Naive thymus-derived CD4-positive, alpha-beta T cell (primary cell): ENCODE measurements at regions of chr1 and their contacts with region 1.

Region 1: GRCh38 chr1:52365746-52366516 is at the start of gene CC2D1B:
- DNase-seq: peak; percentile 97 to 100 (median 99)
- ATAC-seq: peak; percentile 90
- H3K4me3 ChIP-seq: peak within 1 kb of the TSS; percentile 67
- H3K4me3 Mint-ChIP-seq: peak within 1 kb of the TSS; percentile 85 to 98 (median 94)
- H3K27ac ChIP-seq: peak within 1 kb of the TSS; percentile 95
- H3K27ac Mint-ChIP-seq: peak within 1 kb of the TSS; percentile 89 to 97 (median 94)
- H3K4me1 ChIP-seq: peaks cover 15 to 20% of the 10 kb centered on the region in 2 donors
- H3K4me1 Mint-ChIP-seq: peaks cover 26 to 65% (median 51%) of the 10 kb centered on the region in 7 donors
- H3K27me3 ChIP-seq: no peaks in the 10 kb centered on the region
- H3K27me3 Mint-ChIP-seq: no peaks in the 10 kb centered on the region
- total RNA-seq, gene CC2D1B: 44.5 to 91.2 (median 58.3) TPM

Region 2: GRCh38 chr1:51616901-51617708 is 748.8 kb before region 1 on chr1 and contains the start of gene OSBPL9:
- CTCF ChIA-PET with region 1: no interaction called
- POLR2A ChIA-PET with region 1: no interaction called
- intact Hi-C with region 1: loop called in 1 of 2 experiments (anchors 5 kb)
- DNase-seq: peak; percentile 69 to 89 (median 84)
- ATAC-seq: peak; percentile 98
- H3K4me3 ChIP-seq: peak within 1 kb of the TSS; percentile 95
- H3K4me3 Mint-ChIP-seq: peak within 1 kb of the TSS; percentile 98 to 100 (median 99)
- H3K27ac ChIP-seq: peak within 1 kb of the TSS; percentile 86
- H3K27ac Mint-ChIP-seq: peak within 1 kb of the TSS; percentile 94 to 100 (median 99)
- H3K4me1 ChIP-seq: peaks cover 6 to 15% of the 10 kb centered on the region in 2 donors
- H3K4me1 Mint-ChIP-seq: peaks cover 22 to 60% (median 48%) of the 10 kb centered on the region in 7 donors
- H3K27me3 ChIP-seq: no peaks in the 10 kb centered on the region
- H3K27me3 Mint-ChIP-seq: peaks cover 0 to 6% (median 3%) of the 10 kb centered on the region in 5 donors
- total RNA-seq, gene OSBPL9: 44.5 to 56.9 (median 46.6) TPM

Region 3: GRCh38 chr1:51906306-51907078 is 459.4 kb before region 1 on chr1:
- CTCF ChIA-PET with region 1: no interaction called
- POLR2A ChIA-PET with region 1: no interaction called
- intact Hi-C with region 1: no loop called
- DNase-seq: no peak
- ATAC-seq: no peak
- H3K4me3 ChIP-seq: no peak overlapping the region
- H3K4me3 Mint-ChIP-seq: peak overlapping the region in 2 of 10 donors; percentile 30 to 40
- H3K27ac ChIP-seq: no peak overlapping the region
- H3K27ac Mint-ChIP-seq: peak overlapping the region in 8 of 9 donors; percentile 85 to 93 (median 91)
- H3K4me1 ChIP-seq: no peaks in the 10 kb centered on the region
- H3K4me1 Mint-ChIP-seq: peaks cover 0 to 12% (median 8%) of the 10 kb centered on the region in 7 donors
- H3K27me3 ChIP-seq: no peaks in the 10 kb centered on the region
- H3K27me3 Mint-ChIP-seq: peaks cover 0 to 21% (median 6%) of the 10 kb centered on the region in 5 donors

Region 4: DNA sequence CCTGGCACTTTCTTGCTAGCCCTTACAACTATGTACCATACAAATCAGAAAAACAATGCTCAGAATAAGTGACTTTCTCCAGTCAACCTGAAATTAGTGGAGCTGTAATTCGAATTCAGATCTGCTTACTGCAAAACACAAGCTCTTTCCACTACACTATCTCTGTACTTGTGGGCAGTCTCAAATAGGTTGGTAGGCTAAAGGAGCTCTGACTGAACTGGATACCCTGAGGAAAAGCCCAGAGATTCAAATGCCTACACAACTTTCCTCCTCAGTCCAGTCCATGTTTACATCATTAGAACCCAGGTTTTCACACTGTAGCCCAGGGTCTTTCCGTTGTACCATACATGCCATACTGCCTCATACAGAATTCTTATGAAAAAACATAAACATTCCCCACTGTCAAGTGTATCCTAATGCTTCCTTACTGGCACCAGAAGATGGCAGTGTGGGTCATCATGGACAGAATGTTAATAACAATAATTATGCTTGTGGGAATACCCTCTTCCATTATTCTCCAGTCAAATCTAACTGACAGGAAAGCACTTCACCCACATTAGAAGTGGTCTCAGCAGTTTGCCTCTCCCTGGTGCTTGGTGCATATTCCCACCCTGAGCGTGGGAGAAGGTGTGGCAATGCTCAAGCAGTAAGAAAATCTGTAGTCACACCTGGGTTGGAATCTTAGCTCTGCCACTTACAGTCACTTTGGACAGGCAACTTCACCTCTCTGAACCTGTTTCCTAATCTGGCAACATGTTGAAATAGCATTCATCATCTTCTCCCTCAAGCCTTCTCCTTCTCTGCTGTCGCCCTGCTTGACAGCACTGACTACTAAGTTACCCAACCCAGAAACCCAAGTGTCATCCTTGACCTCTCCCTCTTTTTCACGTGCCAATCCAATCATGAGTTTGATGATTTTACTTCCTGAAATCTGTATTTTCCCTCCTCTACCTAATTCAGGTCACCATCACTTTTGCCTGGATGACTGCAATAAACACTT is 238.4 kb before region 1 on chr1:
- CTCF ChIA-PET with region 1: no interaction called
- POLR2A ChIA-PET with region 1: no interaction called
- intact Hi-C with region 1: loop called in 1 of 2 experiments (anchors 5 kb)
- DNase-seq: peak in 3 of 9 donors; percentile 14 to 27 (median 25)
- ATAC-seq: peak; percentile 64
- H3K4me3 ChIP-seq: no peak overlapping the region
- H3K4me3 Mint-ChIP-seq: no peak overlapping the region
- H3K27ac ChIP-seq: no peak overlapping the region
- H3K27ac Mint-ChIP-seq: no peak overlapping the region
- H3K4me1 ChIP-seq: no peaks in the 10 kb centered on the region
- H3K4me1 Mint-ChIP-seq: peaks cover 0 to 4% (median 0%) of the 10 kb centered on the region in 7 donors
- H3K27me3 ChIP-seq: no peaks in the 10 kb centered on the region
- H3K27me3 Mint-ChIP-seq: peaks cover 0 to 47% (median 9%) of the 10 kb centered on the region in 5 donors

Region 5: GRCh38 chr1:52552505-52553361 is 186.8 kb after region 1 on chr1 and contains the start of gene TUT4:
- CTCF ChIA-PET with region 1: no interaction called
- POLR2A ChIA-PET with region 1: interaction called, 3 read pairs
- intact Hi-C with region 1: loop called (anchors 1 kb)
- DNase-seq: peak; percentile 57 to 77 (median 73)
- ATAC-seq: peak; percentile 57
- H3K4me3 ChIP-seq: peak within 1 kb of the TSS; percentile 95
- H3K4me3 Mint-ChIP-seq: peak within 1 kb of the TSS in 8 of 10 donors; percentile 67 to 88 (median 75)
- H3K27ac ChIP-seq: peak within 1 kb of the TSS; percentile 91
- H3K27ac Mint-ChIP-seq: peak within 1 kb of the TSS in 7 of 9 donors; percentile 55 to 94 (median 87)
- H3K4me1 ChIP-seq: peaks cover 0 to 40% of the 10 kb centered on the region in 2 donors
- H3K4me1 Mint-ChIP-seq: peaks cover 23 to 52% (median 43%) of the 10 kb centered on the region in 7 donors
- H3K27me3 ChIP-seq: no peaks in the 10 kb centered on the region
- H3K27me3 Mint-ChIP-seq: peaks cover 0 to 7% (median 0%) of the 10 kb centered on the region in 5 donors
- total RNA-seq, gene TUT4: 80.4 to 169 (median 139) TPM

Region 6: GRCh38 chr1:52702886-52703787 is 337.2 kb after region 1 on chr1:
- CTCF ChIA-PET with region 1: no interaction called
- POLR2A ChIA-PET with region 1: interaction called, 5 read pairs
- intact Hi-C with region 1: loop called in 1 of 2 experiments (anchors 1 kb)
- DNase-seq: peak; percentile 62 to 89 (median 83)
- ATAC-seq: peak; percentile 95
- H3K4me3 ChIP-seq: peak overlapping the region; percentile 52
- H3K4me3 Mint-ChIP-seq: peak overlapping the region; percentile 75 to 96 (median 92)
- H3K27ac ChIP-seq: peak overlapping the region; percentile 83
- H3K27ac Mint-ChIP-seq: peak overlapping the region; percentile 97 to 99 (median 99)
- H3K4me1 ChIP-seq: peaks cover 6% of the 10 kb centered on the region in 2 donors
- H3K4me1 Mint-ChIP-seq: peaks cover 21 to 46% (median 32%) of the 10 kb centered on the region in 7 donors
- H3K27me3 ChIP-seq: no peaks in the 10 kb centered on the region
- H3K27me3 Mint-ChIP-seq: peaks cover 0 to 12% (median 0%) of the 10 kb centered on the region in 5 donors

Region 7: DNA sequence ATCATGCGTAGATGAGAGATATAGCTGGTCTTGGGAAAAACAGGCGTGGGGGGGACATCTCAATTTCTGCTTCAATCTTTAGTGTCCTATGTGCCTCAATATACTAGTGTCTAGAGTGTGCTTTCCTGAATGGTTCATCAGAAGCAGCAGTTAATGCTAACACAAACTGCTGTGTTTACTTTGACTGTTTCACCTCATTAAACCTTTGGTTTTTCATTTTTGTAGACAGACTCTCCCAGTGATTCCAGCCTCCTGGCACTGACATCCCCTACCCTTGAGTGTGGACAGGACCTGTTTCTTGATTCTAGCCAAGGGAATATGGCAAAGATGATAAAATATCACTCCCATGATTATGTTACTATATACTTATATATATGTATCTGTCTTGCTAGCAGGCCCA is 514.3 kb after region 1 on chr1:
- CTCF ChIA-PET with region 1: no interaction called
- POLR2A ChIA-PET with region 1: no interaction called
- intact Hi-C with region 1: no loop called
- DNase-seq: no peak
- ATAC-seq: no peak
- H3K4me3 ChIP-seq: no peak overlapping the region
- H3K4me3 Mint-ChIP-seq: no peak overlapping the region
- H3K27ac ChIP-seq: no peak overlapping the region
- H3K27ac Mint-ChIP-seq: no peak overlapping the region
- H3K4me1 ChIP-seq: no peaks in the 10 kb centered on the region
- H3K4me1 Mint-ChIP-seq: no peaks in the 10 kb centered on the region
- H3K27me3 ChIP-seq: no peaks in the 10 kb centered on the region
- H3K27me3 Mint-ChIP-seq: no peaks in the 10 kb centered on the region

Region 8: GRCh38 chr1:53196485-53197270 is 830.7 kb after region 1 on chr1 and contains the start of gene CPT2:
- CTCF ChIA-PET with region 1: no interaction called
- POLR2A ChIA-PET with region 1: no interaction called
- intact Hi-C with region 1: loop called (anchors 1 to 5 kb)
- DNase-seq: peak; percentile 78 to 94 (median 89)
- ATAC-seq: peak; percentile 99
- H3K4me3 ChIP-seq: peak within 1 kb of the TSS; percentile 91
- H3K4me3 Mint-ChIP-seq: peak within 1 kb of the TSS; percentile 88 to 100 (median 98)
- H3K27ac ChIP-seq: peak within 1 kb of the TSS; percentile 98
- H3K27ac Mint-ChIP-seq: peak within 1 kb of the TSS; percentile 90 to 100 (median 97)
- H3K4me1 ChIP-seq: peaks cover 16 to 20% of the 10 kb centered on the region in 2 donors
- H3K4me1 Mint-ChIP-seq: peaks cover 13 to 48% (median 44%) of the 10 kb centered on the region in 7 donors
- H3K27me3 ChIP-seq: no peaks in the 10 kb centered on the region
- H3K27me3 Mint-ChIP-seq: no peaks in the 10 kb centered on the region
- total RNA-seq, gene CPT2: 8.8 to 23.0 (median 13.4) TPM